ENCODE measurements at regions of chrX and their contacts with region 1.

Region 1: GRCh38 chrX:56729152-56729850 is at the start of gene NBDY:
- DNase-seq: peak; percentile 75
- H3K4me3 Mint-ChIP-seq: peak within 1 kb of the TSS; percentile 94
- H3K27ac Mint-ChIP-seq: peak within 1 kb of the TSS; percentile 89
- H3K4me1 Mint-ChIP-seq: peaks cover 18% of the 10 kb centered on the region
- H3K27me3 Mint-ChIP-seq: no peaks in the 10 kb centered on the region
- total RNA-seq, gene NBDY: 29.8 and 29.9 TPM in 2 replicates

Region 2: GRCh38 chrX:54999717-55000598 is 1729.3 kb before region 1 on chrX and contains the start of gene APEX2:
- intact Hi-C with region 1: loop called (anchors 5 kb)
- DNase-seq: peak; percentile 96
- H3K4me3 Mint-ChIP-seq: peak within 1 kb of the TSS; percentile 97
- H3K27ac Mint-ChIP-seq: peak within 1 kb of the TSS; percentile 87
- H3K4me1 Mint-ChIP-seq: peaks cover 14% of the 10 kb centered on the region
- H3K27me3 Mint-ChIP-seq: no peaks in the 10 kb centered on the region
- total RNA-seq, gene APEX2: 32.2 and 36.1 TPM in 2 replicates

Region 3: GRCh38 chrX:55717521-55718497 is 1011.5 kb before region 1 on chrX and contains the start of gene RRAGB:
- intact Hi-C with region 1: loop called (anchors 5 kb)
- DNase-seq: peak; percentile 96
- H3K4me3 Mint-ChIP-seq: peak within 1 kb of the TSS; percentile 93
- H3K27ac Mint-ChIP-seq: peak within 1 kb of the TSS; percentile 85
- H3K4me1 Mint-ChIP-seq: peaks cover 16% of the 10 kb centered on the region
- H3K27me3 Mint-ChIP-seq: no peaks in the 10 kb centered on the region
- total RNA-seq, gene RRAGB: 6.5 and 8.2 TPM in 2 replicates

Region 4: DNA sequence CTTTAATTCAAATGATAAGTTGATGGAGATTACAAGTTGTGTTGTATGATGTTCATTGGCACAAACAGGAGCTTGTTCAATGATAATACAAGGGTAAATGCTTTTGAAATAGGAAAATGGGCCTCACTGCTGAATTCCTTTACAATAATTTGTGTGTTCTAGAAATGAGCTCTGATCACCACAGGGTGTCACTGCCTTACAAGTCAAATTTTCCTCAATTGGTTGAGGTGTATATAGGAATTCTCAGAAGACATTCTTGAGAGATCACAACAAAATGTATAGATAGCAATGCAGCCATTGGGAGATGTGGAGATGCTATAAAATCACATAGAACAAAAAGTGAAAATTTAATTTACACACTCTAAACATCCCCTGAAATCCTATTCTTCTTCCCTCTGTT is 447.5 kb before region 1 on chrX:
- intact Hi-C with region 1: loop called (anchors 1 kb)
- DNase-seq: peak; percentile 76
- H3K4me3 Mint-ChIP-seq: no peak overlapping the region
- H3K27ac Mint-ChIP-seq: no peak overlapping the region
- H3K4me1 Mint-ChIP-seq: peaks cover 10% of the 10 kb centered on the region
- H3K27me3 Mint-ChIP-seq: no peaks in the 10 kb centered on the region

Region 5: DNA sequence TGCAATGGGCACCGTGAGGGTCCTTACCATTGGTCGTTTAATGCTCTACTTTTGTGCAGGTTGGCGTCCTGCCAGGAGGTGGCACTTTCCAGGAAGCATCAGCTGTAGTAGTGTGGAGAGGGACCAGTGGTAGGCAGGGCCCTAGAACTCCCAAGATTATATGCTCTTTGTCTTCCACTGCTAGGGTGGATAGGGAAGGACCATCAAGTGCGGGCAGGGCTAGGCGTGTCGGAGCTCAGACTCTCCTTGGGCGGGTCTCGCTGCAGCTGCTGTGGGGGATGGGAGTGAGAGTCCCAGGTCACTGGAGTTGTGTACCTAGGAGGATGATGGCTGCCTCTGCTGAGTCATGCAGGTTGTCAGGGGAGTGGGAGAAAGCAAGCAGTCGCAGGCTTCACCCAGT is 362.4 kb before region 1 on chrX:
- intact Hi-C with region 1: loop called (anchors 1 kb)
- DNase-seq: no peak
- H3K4me3 Mint-ChIP-seq: no peak overlapping the region
- H3K27ac Mint-ChIP-seq: peak overlapping the region; percentile 34
- H3K4me1 Mint-ChIP-seq: peaks cover 48% of the 10 kb centered on the region
- H3K27me3 Mint-ChIP-seq: no peaks in the 10 kb centered on the region

Region 6: GRCh38 chrX:56382278-56382677 is 347.0 kb before region 1 on chrX:
- intact Hi-C with region 1: loop called (anchors 1 kb)
- DNase-seq: peak; percentile 62
- H3K4me3 Mint-ChIP-seq: peak overlapping the region; percentile 54
- H3K27ac Mint-ChIP-seq: peak overlapping the region; percentile 88
- H3K4me1 Mint-ChIP-seq: peaks cover 30% of the 10 kb centered on the region
- H3K27me3 Mint-ChIP-seq: no peaks in the 10 kb centered on the region

Region 7: DNA sequence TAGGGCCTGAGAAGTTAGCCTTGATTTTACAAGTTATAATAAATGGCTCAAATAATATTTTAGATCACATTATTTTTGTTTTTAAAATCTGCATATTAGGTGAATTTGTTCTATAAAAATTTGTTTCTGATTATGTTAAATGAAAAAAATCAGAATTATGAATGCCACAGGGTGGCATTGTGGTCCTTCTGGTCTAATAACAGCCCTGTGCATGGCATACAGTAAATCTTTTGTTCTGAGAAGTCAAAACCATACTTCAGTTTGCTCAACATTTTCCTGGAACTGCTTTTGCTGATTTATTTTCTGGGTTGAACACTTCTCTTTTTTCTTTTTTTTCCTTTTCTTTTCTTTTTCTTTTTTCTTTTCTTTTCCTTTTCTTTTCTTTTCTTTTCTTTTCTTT is 266.9 kb before region 1 on chrX:
- intact Hi-C with region 1: loop called (anchors 5 kb)
- DNase-seq: no peak
- H3K4me3 Mint-ChIP-seq: no peak overlapping the region
- H3K27ac Mint-ChIP-seq: no peak overlapping the region
- H3K4me1 Mint-ChIP-seq: peaks cover 5% of the 10 kb centered on the region
- H3K27me3 Mint-ChIP-seq: no peaks in the 10 kb centered on the region